ENCODE measurements at regions of chrX and their contacts with region 1.

Region 1: DNA sequence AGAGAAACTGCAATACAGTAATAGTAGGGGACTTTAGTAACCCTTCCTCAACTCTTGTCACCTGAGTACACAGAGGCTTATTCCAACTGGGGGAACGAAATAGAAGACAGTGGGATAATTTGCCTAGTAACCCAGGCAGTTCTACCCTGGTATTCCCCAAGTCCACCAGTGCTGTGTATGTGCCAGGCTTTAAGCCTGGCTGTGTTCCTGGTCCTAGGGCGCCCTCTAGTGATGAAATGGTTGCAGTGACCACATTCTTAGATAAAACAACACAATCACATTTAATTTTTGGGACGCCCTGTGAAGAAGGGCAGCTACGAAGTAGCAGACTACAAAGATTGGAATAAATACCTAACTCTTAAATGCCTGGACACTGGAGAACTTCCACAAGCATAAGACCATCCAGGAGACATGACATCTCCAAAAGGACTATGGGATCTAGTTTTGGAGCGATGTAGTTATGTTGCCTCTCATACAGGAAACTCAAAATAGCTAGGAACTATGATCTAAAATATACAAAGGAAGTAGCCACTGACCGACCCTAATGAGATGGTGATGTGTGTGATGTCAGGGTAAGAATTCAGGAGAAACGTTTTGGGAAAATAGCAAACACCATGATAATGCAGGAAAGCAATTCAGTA is 288.5 kb upstream of the ZCCHC13 start:
- DNase-seq: no peak
- H3K4me3 ChIP-seq: no peak overlapping the region
- CTCF ChIP-seq: peak; percentile 58

Region 2: DNA sequence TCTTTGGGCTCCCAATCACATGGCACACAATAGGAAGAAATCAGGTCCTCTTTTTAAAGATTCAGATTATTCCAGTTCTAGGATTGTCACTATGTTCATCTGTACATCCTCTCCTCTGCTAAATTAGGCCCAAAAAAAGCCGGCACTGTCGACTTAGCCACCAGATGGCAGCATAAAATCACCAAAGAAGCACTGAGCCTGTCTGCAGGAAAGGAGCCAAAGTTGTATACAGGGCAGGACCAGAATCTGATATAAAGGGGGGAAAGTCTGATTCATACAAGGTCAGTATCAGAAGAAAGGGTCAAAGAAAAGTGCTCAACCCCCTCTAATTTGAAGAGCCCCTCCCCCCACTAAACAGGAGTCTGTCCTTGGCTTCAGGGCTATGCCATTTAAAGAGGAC is 160.0 kb before region 1 on chrX:
- CTCF ChIA-PET with region 1: interaction called, 49 read pairs
- POLR2A ChIA-PET with region 1: no interaction called
- DNase-seq: peak; percentile 1
- H3K4me3 ChIP-seq: no peak overlapping the region
- CTCF ChIP-seq: peak; percentile 46

Measured in AG04449 (cell line).